AG04449 (cell line): ENCODE measurements at regions of chr19 and their contacts with region 1.

Region 1: GRCh38 chr19:55503502-55504251 is 15.4 kb downstream of the SSC5D start:
- DNase-seq: no peak
- H3K4me3 ChIP-seq: peak overlapping the region; percentile 63
- CTCF ChIP-seq: peak; percentile 99

Region 2: DNA sequence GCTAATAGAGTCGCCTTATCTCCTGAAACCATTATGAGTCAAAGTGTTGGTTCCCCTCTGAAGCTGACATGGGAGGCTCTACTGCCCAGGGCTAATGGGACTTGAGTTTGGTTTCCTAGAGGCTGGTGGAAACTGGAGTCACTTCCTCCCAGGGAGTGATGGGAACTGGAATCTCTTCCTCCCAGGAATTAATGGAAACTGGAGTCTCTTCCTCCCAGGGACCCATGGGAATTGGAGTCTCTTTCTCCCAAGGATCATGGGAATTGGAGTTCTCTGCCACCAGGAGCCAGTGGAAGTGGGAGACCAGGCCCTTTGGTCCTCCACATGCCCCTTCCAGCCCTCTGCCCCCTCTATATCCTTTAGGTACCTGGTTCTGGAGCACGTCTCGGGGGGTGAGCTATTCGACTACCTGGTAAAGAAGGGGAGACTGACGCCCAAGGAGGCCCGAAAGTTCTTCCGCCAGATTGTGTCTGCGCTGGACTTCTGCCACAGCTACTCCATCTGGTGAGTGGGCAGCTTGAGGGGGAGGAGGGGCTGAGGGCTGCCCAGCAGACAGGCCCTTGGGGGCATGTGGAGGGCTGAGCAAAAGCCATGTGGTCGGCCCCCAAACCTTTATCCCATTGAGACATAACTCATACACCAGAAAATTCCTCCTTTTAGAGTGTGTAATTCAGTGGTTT is 214.4 kb before region 1 on chr19:
- CTCF ChIA-PET with region 1: interaction called, 13 read pairs
- POLR2A ChIA-PET with region 1: no interaction called
- DNase-seq: no peak
- H3K4me3 ChIP-seq: no peak overlapping the region
- CTCF ChIP-seq: no peak

Region 3: GRCh38 chr19:55336101-55336500 is 167.6 kb before region 1 on chr19:
- CTCF ChIA-PET with region 1: no interaction called
- POLR2A ChIA-PET with region 1: no interaction called
- DNase-seq: no peak
- H3K4me3 ChIP-seq: no peak overlapping the region
- CTCF ChIP-seq: no peak

Region 4: DNA sequence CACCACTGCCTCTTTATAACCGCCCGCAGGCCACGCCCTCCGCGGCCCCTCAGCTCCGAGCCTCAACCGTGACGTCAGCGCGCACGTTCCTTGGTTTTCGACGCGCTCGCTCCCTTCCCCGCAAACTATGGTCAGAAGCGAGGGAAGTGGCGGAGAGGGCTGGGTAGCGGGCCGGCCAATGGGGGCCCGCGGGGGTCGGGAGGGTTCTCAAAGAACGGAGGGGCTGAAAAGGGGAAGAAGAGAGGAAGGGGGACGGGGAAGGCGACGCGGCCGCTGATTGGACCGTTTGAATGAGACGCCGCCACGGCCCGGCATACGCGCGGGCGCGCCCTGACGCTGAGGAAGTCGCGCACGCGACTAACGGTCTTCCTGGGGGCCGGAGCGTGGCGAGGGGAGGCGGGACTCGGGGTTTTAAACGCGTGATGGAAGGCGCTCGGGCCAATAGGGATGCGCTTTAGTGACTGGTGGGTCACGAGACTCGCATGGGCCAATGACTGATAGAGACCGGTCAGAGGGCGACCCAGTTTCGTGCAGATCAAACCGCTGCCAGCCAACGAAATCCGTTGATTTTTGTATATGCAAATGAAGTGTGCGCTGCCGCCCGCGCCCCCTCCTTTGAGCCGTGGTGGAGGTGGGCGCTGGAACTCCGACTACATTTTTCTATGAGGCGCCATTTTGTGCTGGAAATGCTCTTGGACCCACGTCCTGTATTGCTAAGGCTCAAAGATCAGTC is 95.7 kb before region 1 on chr19:
- CTCF ChIA-PET with region 1: interaction called, 16 read pairs
- POLR2A ChIA-PET with region 1: interaction called, 10 read pairs
- DNase-seq: peak; percentile 95
- H3K4me3 ChIP-seq: peak overlapping the region; percentile 84
- CTCF ChIP-seq: no peak

Region 5: DNA sequence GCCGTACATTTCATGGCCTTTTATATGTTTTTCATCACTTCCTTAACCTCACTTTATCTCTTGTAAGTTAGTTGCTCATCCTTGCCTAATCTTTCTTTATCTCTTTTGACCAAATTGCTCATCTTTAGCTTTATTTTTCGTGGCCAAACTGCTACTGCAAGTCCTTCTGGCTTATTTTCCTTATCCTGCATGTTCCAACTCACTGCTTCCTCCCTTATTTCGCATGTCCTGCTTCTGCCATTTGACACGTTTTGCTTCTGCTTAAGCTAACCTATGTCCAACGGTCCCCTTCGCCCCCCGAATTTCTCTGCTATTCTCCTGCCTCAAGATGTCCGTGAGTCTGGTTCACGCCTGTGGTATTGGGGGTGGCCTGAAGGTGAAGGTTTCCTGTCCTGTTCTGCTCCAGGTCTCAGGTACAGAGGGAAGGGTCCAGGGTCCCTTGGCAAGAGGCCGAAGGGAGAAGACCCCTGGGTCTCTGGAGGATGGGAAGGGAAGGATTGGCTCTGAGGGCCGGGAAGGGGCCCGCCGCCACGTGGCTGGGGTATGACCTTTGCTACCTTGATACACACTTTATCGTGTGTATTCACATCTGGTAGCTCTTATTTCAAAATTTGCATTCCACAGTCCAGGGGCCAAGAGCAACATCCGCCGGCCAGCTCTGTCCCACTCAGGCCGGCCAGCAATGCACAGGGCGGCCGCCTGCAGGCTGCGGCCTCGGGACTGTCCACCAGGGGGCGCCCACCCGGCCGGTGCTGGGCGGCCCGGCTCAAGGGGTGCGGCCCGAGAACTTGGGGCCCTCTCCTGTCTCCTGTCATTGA is 36.2 kb before region 1 on chr19:
- CTCF ChIA-PET with region 1: interaction called, 241 read pairs
- POLR2A ChIA-PET with region 1: interaction called, 8 read pairs
- DNase-seq: no peak
- H3K4me3 ChIP-seq: no peak overlapping the region
- CTCF ChIP-seq: peak; percentile 96

Region 6: GRCh38 chr19:55516878-55517620 is 13.4 kb after region 1 on chr19:
- CTCF ChIA-PET with region 1: interaction called, 63 read pairs
- POLR2A ChIA-PET with region 1: no interaction called
- DNase-seq: peak; percentile 40
- H3K4me3 ChIP-seq: peak overlapping the region; percentile 46
- CTCF ChIP-seq: peak; percentile 99

Region 7: GRCh38 chr19:55598719-55599467 is 95.2 kb after region 1 on chr19:
- CTCF ChIA-PET with region 1: no interaction called
- POLR2A ChIA-PET with region 1: no interaction called
- DNase-seq: peak; percentile 74
- H3K4me3 ChIP-seq: peak overlapping the region; percentile 87
- CTCF ChIP-seq: no peak

Region 8: DNA sequence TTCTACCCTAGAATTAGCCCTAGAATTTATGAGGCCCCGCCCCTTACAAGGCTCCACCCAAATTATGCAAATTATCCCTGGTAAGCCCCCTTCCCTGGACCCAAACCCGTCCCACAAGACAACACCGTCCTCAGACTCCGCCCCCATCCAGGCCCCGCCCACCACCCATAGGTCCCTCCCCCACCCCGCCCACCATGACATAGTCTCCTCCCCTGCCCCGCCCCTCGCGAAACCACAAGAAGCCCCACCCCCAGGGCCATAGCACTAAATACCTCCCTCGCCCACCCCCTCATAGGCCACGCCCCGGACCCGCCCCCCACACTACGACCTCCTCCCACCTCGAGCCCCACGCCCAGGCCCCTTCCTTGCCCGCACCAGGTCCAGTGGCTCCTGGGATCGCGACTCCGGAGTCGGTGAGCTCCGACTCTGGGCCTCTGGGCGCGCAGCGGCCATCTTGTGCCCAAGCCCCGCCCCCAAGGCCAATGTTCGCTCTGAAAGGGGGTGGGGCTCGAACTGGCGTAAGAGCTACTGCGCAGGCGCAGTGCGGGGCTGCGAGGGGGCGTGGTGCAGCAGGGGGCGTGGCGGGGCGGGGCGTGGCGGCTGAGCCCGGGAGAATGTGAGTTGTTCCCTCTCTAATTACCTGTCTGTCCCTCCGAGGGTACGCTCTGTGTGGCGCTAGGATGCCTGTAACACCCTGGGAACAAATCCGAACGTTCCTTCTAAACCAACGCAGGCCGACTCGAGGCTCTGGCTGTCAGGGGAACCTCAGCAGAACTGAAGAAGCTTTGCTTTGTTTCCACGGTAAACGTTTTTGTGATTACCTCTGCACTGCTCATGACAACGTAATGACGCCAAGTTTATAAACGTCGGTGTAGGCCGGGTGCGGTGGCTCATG is 120.7 kb after region 1 on chr19 and contains the start of gene ZNF784:
- CTCF ChIA-PET with region 1: interaction called, 35 read pairs
- POLR2A ChIA-PET with region 1: no interaction called
- DNase-seq: no peak
- H3K4me3 ChIP-seq: peak within 1 kb of the TSS; percentile 78
- CTCF ChIP-seq: no peak